Heart right ventricle (tissue), 16 donors: ENCODE measurements at regions of chr18 and their contacts with region 1.

Region 1: GRCh38 chr18:6885992-6886796 is 156.7 kb downstream of the ARHGAP28 start:
- DNase-seq: peak in 1 of 2 donors; percentile 67
- ATAC-seq: peak in 7 of 8 donors; percentile 67 to 87 (median 73)
- H3K4me3 ChIP-seq: no peak overlapping the region
- H3K27ac ChIP-seq: no peak overlapping the region
- H3K4me1 ChIP-seq: peaks cover 0 to 6% (median 0%) of the 10 kb centered on the region in 9 donors
- H3K27me3 ChIP-seq: no peaks in the 10 kb centered on the region
- CTCF ChIP-seq: peak; percentile 42 to 88 (median 80)

Region 2: GRCh38 chr18:5600378-5601071 is 1285.7 kb before region 1 on chr18:
- intact Hi-C with region 1: loop called in 2 of 10 experiments (anchors 5 to 10 kb)
- DNase-seq: no peak
- ATAC-seq: no peak
- H3K4me3 ChIP-seq: no peak overlapping the region
- H3K27ac ChIP-seq: no peak overlapping the region
- H3K4me1 ChIP-seq: no peaks in the 10 kb centered on the region
- H3K27me3 ChIP-seq: peaks cover 0 to 12% (median 0%) of the 10 kb centered on the region in 7 donors
- CTCF ChIP-seq: peak in 8 of 9 donors; percentile 24 to 61 (median 47)

Region 3: DNA sequence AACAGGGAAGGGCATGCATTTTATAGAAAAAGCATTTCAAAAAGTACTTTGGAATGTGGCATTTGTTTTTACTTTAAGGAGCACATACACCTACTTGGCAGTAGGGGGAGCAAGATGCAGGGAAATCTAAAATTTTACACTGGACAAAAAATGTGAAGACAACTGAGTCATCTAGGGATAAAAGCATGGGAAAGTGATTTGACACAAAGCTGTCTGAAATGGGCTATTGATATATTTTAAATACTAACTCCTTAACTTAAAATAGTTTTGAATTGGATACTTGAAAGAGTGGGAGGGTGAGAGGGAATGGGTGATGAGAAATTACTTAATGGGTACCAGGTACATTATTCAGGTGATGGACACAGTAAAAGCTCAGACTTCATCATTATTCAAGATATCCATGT is 1006.7 kb before region 1 on chr18:
- intact Hi-C with region 1: loop called in 7 of 10 experiments (anchors 5 to 10 kb)
- DNase-seq: no peak
- ATAC-seq: peak in 1 of 8 donors; percentile 37
- H3K4me3 ChIP-seq: no peak overlapping the region
- H3K27ac ChIP-seq: no peak overlapping the region
- H3K4me1 ChIP-seq: no peaks in the 10 kb centered on the region
- H3K27me3 ChIP-seq: peaks cover 0 to 47% (median 24%) of the 10 kb centered on the region in 7 donors
- CTCF ChIP-seq: peak; percentile 70 to 89 (median 81)

Region 4: DNA sequence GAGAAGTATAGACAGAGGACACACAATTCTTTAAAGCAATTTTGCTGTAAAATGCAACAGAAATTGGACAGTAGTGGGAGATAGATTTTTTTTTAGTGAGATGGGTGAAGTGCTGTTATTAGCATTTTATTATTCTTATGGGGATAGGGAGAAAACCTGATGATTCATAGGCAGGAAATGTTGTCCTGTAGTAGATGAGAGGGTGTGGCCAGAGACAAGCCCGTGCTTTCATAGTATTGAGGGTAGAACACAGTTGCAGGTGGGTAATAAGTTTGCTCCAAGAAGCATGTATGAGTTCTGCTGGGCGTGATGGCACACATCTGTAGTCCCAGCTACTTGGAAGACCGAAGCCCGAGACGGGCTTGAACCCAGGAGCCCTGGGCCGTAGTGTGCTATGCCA is 285.0 kb before region 1 on chr18:
- intact Hi-C with region 1: loop called in 1 of 10 experiments (anchors 5 kb)
- DNase-seq: no peak
- ATAC-seq: no peak
- H3K4me3 ChIP-seq: no peak overlapping the region
- H3K27ac ChIP-seq: no peak overlapping the region
- H3K4me1 ChIP-seq: no peaks in the 10 kb centered on the region
- H3K27me3 ChIP-seq: peaks cover 0 to 3% (median 0%) of the 10 kb centered on the region in 7 donors
- CTCF ChIP-seq: no peak